ENCODE measurements at regions of chr12 and their contacts with region 1.

Region 1: GRCh38 chr12:19915392-19916195 is 452.7 kb upstream of the PDE3A start:
- DNase-seq: peak; percentile 57
- H3K4me3 ChIP-seq: no peak overlapping the region
- H3K27ac ChIP-seq: no peak overlapping the region
- H3K4me1 ChIP-seq: no peaks in the 10 kb centered on the region
- H3K27me3 ChIP-seq: no peaks in the 10 kb centered on the region

Region 2: DNA sequence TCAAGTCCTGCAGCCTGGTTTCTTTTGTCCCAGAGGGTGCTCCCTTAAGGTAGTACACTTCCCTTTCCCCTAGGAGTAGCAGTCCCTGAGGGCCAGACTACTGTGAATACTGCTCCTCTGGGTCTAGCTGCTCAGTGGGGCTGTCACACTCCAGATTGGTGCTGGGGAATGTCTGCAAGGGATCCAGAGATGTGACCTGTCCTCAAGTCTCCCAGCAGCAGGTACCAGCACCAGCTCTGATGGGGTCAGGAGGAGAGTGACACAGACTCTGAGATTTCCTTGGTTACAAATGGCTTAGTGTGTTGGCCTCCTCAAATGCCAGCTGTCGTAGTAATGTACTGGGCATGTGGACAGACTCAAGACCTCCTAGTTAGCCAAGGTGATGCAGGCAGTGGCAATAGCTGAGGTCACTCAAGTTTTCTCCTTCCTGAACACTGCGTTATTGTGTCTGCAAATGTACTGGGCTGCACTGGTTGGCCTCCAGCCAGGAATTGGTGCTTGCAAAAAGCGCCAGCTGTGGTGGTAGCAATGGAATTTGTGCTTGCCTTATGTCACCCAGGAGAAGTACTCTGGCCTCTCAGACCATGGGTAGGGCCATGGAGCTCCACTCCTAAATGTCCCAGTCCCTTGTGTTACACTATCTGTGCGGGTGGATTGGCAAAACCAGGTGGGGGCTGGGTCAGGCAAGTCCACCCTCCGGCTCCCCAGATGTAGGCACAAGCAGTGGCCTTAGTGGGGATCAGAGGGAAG is 512.7 kb before region 1 on chr12:
- in situ Hi-C with region 1: no loop called
- DNase-seq: peak; percentile 49
- H3K4me3 ChIP-seq: no peak overlapping the region
- H3K27ac ChIP-seq: no peak overlapping the region
- H3K4me1 ChIP-seq: no peaks in the 10 kb centered on the region
- H3K27me3 ChIP-seq: no peaks in the 10 kb centered on the region

Region 3: GRCh38 chr12:19819231-19819630 is 96.4 kb before region 1 on chr12:
- in situ Hi-C with region 1: no loop called
- DNase-seq: no peak
- H3K4me3 ChIP-seq: no peak overlapping the region
- H3K27ac ChIP-seq: no peak overlapping the region
- H3K4me1 ChIP-seq: no peaks in the 10 kb centered on the region
- H3K27me3 ChIP-seq: no peaks in the 10 kb centered on the region

Region 4: DNA sequence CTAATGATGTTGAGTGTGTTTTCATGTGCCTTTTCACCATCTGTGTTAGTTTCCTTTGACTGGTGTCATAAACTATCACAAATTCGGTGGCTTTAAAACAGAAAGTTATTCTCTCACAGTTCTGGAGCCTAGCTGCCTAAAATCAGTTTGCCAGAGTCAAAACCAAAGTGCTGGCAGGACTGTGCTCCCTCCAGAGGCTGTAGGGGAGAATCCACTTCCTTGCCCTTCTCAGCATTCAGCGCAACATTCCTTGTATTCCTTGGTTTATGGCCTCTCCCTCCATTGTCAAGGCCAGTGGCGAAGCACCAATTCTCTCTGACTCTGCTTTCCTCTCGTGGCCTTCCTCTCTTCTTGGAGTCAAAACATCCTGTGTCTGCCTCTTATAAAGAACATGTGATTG is 278.6 kb after region 1 on chr12:
- in situ Hi-C with region 1: loop called (anchors 25 kb)
- DNase-seq: peak; percentile 57
- H3K4me3 ChIP-seq: peak overlapping the region; percentile 47
- H3K27ac ChIP-seq: no peak overlapping the region
- H3K4me1 ChIP-seq: no peaks in the 10 kb centered on the region
- H3K27me3 ChIP-seq: no peaks in the 10 kb centered on the region

Region 5: DNA sequence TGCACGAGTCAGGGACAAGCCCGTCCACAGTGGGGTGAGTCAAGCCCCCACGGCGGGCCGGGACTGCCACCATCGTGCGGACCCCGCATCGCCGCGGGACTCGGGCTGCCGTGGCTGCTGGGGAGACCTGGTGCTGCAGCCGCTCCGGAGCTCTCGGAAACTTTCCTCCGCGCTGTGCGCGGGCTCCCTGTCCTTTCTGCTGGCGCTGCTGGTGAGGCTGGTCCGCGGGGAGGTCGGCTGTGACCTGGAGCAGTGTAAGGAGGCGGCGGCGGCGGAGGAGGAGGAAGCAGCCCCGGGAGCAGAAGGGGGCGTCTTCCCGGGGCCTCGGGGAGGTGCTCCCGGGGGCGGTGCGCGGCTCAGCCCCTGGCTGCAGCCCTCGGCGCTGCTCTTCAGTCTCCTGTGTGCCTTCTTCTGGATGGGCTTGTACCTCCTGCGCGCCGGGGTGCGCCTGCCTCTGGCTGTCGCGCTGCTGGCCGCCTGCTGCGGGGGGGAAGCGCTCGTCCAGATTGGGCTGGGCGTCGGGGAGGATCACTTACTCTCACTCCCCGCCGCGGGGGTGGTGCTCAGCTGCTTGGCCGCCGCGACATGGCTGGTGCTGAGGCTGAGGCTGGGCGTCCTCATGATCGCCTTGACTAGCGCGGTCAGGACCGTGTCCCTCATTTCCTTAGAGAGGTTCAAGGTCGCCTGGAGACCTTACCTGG is 453.9 kb after region 1 on chr12:
- in situ Hi-C with region 1: loop called (anchors 25 kb)
- DNase-seq: peak; percentile 65
- H3K4me3 ChIP-seq: peak overlapping the region; percentile 87
- H3K27ac ChIP-seq: no peak overlapping the region
- H3K4me1 ChIP-seq: no peaks in the 10 kb centered on the region
- H3K27me3 ChIP-seq: no peaks in the 10 kb centered on the region

Measured in GM23248 (cell line).